SK-N-SH (cell line): ENCODE measurements at regions of chr15 and their contacts with region 1.

Region 1: DNA sequence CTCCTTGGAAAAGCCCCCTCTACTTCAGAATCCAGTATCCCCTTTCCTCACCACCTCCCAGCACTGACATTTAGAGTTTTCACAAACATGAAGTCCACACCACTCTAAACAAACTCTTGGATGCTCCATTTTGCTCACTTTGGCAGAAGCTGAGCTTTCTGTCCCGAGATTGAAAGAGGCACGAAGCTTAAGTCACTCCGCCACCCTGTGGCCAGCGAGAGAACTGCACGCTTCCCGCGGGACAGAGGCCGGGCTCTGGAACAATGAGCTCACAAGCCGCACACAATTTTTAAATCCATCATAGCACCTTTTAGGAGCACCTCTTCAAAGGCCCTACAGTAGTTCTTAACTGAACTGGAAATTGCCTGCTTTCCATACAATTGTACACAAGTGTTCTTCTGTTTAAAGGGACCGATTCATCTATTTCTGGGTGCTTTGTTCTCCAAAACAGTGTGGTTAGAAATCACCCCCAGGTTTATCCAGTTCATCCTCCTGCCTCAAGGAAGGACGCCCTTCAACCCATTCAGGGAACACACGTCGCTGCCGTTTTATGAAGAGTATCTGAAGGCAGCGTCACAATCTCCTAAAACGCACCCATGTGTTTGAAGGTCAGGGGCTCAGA is 226.1 kb downstream of the VPS13C start:
- DNase-seq: peak; percentile 75
- H3K4me3 ChIP-seq: peak overlapping the region in 1 of 2 experiments; percentile 5; a peak in 1 of 4 replicates
- H3K27ac ChIP-seq: no peak overlapping the region
- H3K4me1 ChIP-seq: peaks cover 0 to 18% of the 10 kb centered on the region in 2 experiments; a peak in 1 of 4 replicates
- H3K27me3 ChIP-seq: no peaks in the 10 kb centered on the region
- CTCF ChIP-seq: peak; percentile 93
- EP300 ChIP-seq: no peak
- RAD21 ChIP-seq: peak; percentile 96

Region 2: DNA sequence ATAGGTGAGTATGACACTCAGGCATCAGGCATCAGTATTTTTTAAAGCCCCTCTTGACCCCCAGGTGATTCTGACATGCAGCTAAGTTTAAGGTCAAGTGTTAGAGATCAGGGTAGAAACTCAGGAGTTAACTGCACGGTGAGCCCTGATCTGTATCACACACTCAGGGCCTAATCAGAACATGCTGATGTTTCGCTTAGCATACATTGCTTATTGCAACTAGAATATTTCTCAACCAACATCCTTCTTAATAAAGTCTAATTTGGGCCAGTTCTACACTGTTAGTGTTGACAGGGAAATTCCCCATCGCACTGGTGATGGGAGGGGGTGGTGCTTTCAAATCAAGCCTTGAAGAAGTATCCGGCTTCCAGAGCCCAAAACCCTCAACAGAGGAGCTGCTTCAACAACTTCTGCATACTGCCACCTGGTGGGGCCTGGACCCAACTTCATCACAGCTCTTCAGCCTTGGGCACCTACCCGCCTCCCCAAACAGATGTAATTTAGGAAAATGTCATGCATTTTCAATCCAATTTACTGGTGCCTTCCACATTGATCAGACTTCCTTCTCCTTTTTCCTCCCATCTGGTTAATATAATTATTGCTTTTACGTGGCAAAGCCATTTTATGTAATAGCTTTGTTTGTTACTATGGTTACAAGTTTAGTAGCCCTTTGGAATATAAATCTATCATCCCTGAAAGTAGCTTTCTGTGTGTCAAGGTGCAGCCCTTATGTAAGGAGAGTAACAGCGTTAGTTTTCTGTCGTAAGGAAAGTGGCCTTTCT is 917.3 kb before region 1 on chr15:
- CTCF ChIA-PET with region 1: interaction called, 13 read pairs
- POLR2A ChIA-PET with region 1: no interaction called
- DNase-seq: peak; percentile 73
- H3K4me3 ChIP-seq: no peak overlapping the region; a peak in 1 of 4 replicates
- H3K27ac ChIP-seq: no peak overlapping the region
- H3K4me1 ChIP-seq: peaks cover 0 to 4% of the 10 kb centered on the region in 2 experiments; a peak in 1 of 4 replicates
- H3K27me3 ChIP-seq: no peaks in the 10 kb centered on the region
- CTCF ChIP-seq: peak; percentile 83
- EP300 ChIP-seq: no peak
- RAD21 ChIP-seq: peak; percentile 89

Region 3: GRCh38 chr15:61157933-61158332 is 676.3 kb before region 1 on chr15:
- CTCF ChIA-PET with region 1: interaction called, 20 read pairs
- POLR2A ChIA-PET with region 1: no interaction called
- DNase-seq: no peak
- H3K4me3 ChIP-seq: no peak overlapping the region
- H3K27ac ChIP-seq: no peak overlapping the region
- H3K4me1 ChIP-seq: peaks cover 0 to 9% of the 10 kb centered on the region in 2 experiments; a peak in 1 of 4 replicates
- H3K27me3 ChIP-seq: no peaks in the 10 kb centered on the region
- CTCF ChIP-seq: no peak
- EP300 ChIP-seq: no peak
- RAD21 ChIP-seq: no peak

Region 4: DNA sequence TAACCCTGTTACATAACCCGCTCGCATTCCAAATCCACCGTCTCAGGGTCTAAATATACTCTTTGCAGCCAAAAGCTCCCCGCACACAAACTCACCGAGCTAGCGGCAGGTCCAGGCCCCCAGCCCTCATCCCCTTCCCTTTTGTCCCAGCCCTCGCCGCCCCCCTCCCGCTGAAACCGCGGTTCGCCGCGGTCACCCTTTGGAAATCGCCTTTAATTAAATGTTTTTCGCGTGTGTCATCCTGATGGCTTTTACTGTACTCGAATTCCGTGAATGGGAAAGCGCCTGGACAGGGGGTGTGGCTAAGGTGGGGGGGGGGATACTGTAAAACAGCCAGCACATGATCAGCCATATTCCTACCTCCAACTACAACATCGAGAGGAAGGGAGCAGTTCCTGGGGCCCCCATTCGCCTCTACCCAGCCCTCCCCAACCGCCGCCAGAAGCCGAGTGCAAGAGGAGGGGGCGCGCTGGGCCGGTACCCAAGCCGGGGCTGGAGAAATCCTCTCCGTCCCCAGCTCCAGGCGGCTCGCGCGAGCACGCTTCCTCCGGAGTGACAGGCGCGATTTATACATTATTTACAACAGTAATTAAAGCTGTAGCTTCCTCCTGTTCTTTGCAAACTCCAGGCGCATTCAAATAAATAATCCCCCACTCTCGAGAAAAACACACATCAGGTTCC is 606.8 kb before region 1 on chr15:
- CTCF ChIA-PET with region 1: interaction called, 11 read pairs
- POLR2A ChIA-PET with region 1: no interaction called
- DNase-seq: peak; percentile 76
- H3K4me3 ChIP-seq: peak overlapping the region; percentile 75 to 90
- H3K27ac ChIP-seq: peak overlapping the region in 1 of 2 experiments; percentile 29; a peak in 1 of 4 replicates
- H3K4me1 ChIP-seq: peaks cover 3 to 5% of the 10 kb centered on the region in 2 experiments; a peak in 2 of 4 replicates
- H3K27me3 ChIP-seq: no peaks in the 10 kb centered on the region
- CTCF ChIP-seq: no peak
- EP300 ChIP-seq: peak in 1 of 2 experiments; percentile 29; a peak in 1 of 4 replicates
- RAD21 ChIP-seq: no peak

Region 5: DNA sequence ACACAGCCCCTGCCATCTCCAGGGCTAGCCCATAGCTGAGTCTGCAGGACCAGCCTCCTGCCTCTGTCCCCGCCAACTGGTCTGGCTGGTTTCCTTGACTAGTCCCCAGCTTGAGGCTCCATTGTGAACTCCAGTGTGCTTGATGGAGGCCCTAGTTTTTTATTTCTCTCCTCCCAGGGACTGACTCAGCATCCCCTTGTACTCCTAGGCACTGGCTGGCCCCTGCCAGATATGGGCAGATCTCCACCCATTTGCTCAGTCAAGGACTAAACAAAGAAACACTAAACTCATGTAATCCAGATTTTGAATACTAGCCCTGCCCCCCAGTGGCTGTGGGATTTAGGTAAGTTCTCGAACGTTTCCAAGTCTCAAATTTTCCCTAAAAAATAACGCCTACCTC is 189.6 kb before region 1 on chr15:
- CTCF ChIA-PET with region 1: interaction called, 44 read pairs
- POLR2A ChIA-PET with region 1: no interaction called
- DNase-seq: no peak
- H3K4me3 ChIP-seq: no peak overlapping the region
- H3K27ac ChIP-seq: no peak overlapping the region
- H3K4me1 ChIP-seq: no peaks in the 10 kb centered on the region; a peak in 1 of 4 replicates
- H3K27me3 ChIP-seq: no peaks in the 10 kb centered on the region; the same call in 1 of the 2 replicates
- CTCF ChIP-seq: peak; percentile 19; the same call in 1 of the 2 replicates
- EP300 ChIP-seq: no peak
- RAD21 ChIP-seq: no peak

Region 6: GRCh38 chr15:61851955-61852354 is 17.8 kb after region 1 on chr15:
- CTCF ChIA-PET with region 1: interaction called, 36 read pairs
- POLR2A ChIA-PET with region 1: no interaction called
- DNase-seq: no peak
- H3K4me3 ChIP-seq: no peak overlapping the region
- H3K27ac ChIP-seq: no peak overlapping the region
- H3K4me1 ChIP-seq: no peaks in the 10 kb centered on the region
- H3K27me3 ChIP-seq: no peaks in the 10 kb centered on the region
- CTCF ChIP-seq: no peak
- EP300 ChIP-seq: no peak
- RAD21 ChIP-seq: no peak